Caco-2 (cell line): ENCODE measurements at regions of chr9 and their contacts with region 1.

Region 1: DNA sequence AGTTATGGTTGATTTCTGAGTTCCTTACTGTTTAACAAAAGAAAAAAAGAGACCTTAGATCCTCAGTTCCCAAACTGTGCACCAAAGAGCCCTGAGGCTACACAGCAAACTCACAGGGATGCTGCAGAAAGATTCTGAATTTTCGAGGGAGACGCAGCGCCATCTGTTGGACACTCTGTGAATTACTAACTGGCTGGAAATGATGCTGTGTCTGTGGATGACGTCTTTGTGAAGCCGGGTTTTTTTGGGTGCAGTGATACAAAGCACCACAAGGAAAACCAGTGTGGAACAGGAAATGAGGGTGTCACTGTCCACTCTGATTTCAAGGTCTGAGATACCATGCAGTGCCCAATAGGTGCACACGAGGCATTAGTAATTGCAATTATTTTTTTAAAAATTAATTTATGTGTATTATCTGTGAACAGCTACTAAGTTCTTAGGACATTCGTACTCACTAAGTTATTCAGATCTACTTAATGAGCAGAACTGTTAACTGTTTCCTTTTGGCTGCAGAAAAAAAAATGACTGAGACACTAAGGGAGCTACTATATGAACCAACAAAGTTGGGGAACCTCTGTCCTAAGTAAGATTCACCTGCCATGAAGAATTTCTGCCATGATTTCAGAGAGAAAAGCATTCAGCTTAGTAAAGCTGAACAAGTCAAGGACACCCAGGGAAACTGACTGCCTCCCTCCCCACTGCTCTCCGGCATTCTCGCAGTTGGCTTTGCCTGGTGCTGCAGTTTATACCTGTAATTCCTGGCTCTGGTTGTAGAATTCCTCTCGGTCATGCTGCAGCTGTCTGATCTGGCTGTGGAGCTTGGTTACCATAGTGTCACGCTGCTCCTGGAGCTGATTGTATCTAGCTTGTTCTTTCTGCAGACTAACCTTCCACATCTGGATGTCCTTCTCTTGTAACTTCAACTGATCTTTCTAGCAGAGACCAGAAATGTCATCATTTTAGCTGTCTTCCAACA is 23.4 kb downstream of the SPACA9 start:
- DNase-seq: peak; percentile 79 to 83
- H3K4me3 ChIP-seq: no peak overlapping the region
- H3K4me3 Mint-ChIP-seq: no peak overlapping the region
- H3K27ac Mint-ChIP-seq: no peak overlapping the region
- H3K4me1 ChIP-seq: no peaks in the 10 kb centered on the region
- H3K4me1 Mint-ChIP-seq: no peaks in the 10 kb centered on the region
- H3K27me3 ChIP-seq: no peaks in the 10 kb centered on the region
- H3K27me3 Mint-ChIP-seq: no peaks in the 10 kb centered on the region
- CTCF ChIP-seq: peak; percentile 80 to 90

Region 2: GRCh38 chr9:132823370-132824145 is 78.6 kb before region 1 on chr9:
- CTCF ChIA-PET with region 1: no interaction called
- POLR2A ChIA-PET with region 1: no interaction called
- intact Hi-C with region 1: loop called (anchors 5 kb)
- DNase-seq: peak in 1 of 2 experiments; percentile 27
- H3K4me3 ChIP-seq: no peak overlapping the region
- H3K4me3 Mint-ChIP-seq: no peak overlapping the region
- H3K27ac Mint-ChIP-seq: no peak overlapping the region
- H3K4me1 ChIP-seq: no peaks in the 10 kb centered on the region
- H3K4me1 Mint-ChIP-seq: no peaks in the 10 kb centered on the region
- H3K27me3 ChIP-seq: no peaks in the 10 kb centered on the region
- H3K27me3 Mint-ChIP-seq: peaks cover 17% of the 10 kb centered on the region
- CTCF ChIP-seq: peak; percentile 14 to 37

Region 3: GRCh38 chr9:132833550-132834121 is 68.5 kb before region 1 on chr9:
- CTCF ChIA-PET with region 1: no interaction called
- POLR2A ChIA-PET with region 1: no interaction called
- intact Hi-C with region 1: no loop called
- DNase-seq: peak in 1 of 2 experiments; percentile 14
- H3K4me3 ChIP-seq: no peak overlapping the region
- H3K4me3 Mint-ChIP-seq: no peak overlapping the region
- H3K27ac Mint-ChIP-seq: no peak overlapping the region
- H3K4me1 ChIP-seq: no peaks in the 10 kb centered on the region
- H3K4me1 Mint-ChIP-seq: no peaks in the 10 kb centered on the region
- H3K27me3 ChIP-seq: no peaks in the 10 kb centered on the region; the same call in 1 of the 2 replicates
- H3K27me3 Mint-ChIP-seq: peaks cover 3% of the 10 kb centered on the region
- CTCF ChIP-seq: no peak

Region 4: GRCh38 chr9:132849185-132849706 is 52.9 kb before region 1 on chr9:
- CTCF ChIA-PET with region 1: no interaction called
- POLR2A ChIA-PET with region 1: no interaction called
- intact Hi-C with region 1: loop called (anchors 1 kb)
- DNase-seq: no peak
- H3K4me3 ChIP-seq: no peak overlapping the region
- H3K4me3 Mint-ChIP-seq: no peak overlapping the region
- H3K27ac Mint-ChIP-seq: no peak overlapping the region
- H3K4me1 ChIP-seq: no peaks in the 10 kb centered on the region
- H3K4me1 Mint-ChIP-seq: no peaks in the 10 kb centered on the region
- H3K27me3 ChIP-seq: no peaks in the 10 kb centered on the region
- H3K27me3 Mint-ChIP-seq: no peaks in the 10 kb centered on the region
- CTCF ChIP-seq: no peak

Region 5: GRCh38 chr9:132973713-132974112 is 71.6 kb after region 1 on chr9:
- CTCF ChIA-PET with region 1: no interaction called
- POLR2A ChIA-PET with region 1: no interaction called
- intact Hi-C with region 1: loop called (anchors 1 kb)
- DNase-seq: peak; percentile 38 to 68
- H3K4me3 ChIP-seq: no peak overlapping the region
- H3K4me3 Mint-ChIP-seq: no peak overlapping the region
- H3K27ac Mint-ChIP-seq: no peak overlapping the region
- H3K4me1 ChIP-seq: peaks cover 27% of the 10 kb centered on the region
- H3K4me1 Mint-ChIP-seq: peaks cover 7% of the 10 kb centered on the region
- H3K27me3 ChIP-seq: no peaks in the 10 kb centered on the region
- H3K27me3 Mint-ChIP-seq: peaks cover 3% of the 10 kb centered on the region
- CTCF ChIP-seq: no peak